Naive thymus-derived CD4-positive, alpha-beta T cell (primary cell): ENCODE measurements at regions of chr1 and their contacts with region 1.

Region 1: GRCh38 chr1:15526490-15527339 is at the start of gene DNAJC16:
- DNase-seq: peak; percentile 75 to 98 (median 96)
- ATAC-seq: peak; percentile 50
- H3K4me3 ChIP-seq: peak within 1 kb of the TSS; percentile 78
- H3K4me3 Mint-ChIP-seq: peak within 1 kb of the TSS; percentile 82 to 100 (median 91)
- H3K27ac ChIP-seq: peak within 1 kb of the TSS; percentile 100
- H3K27ac Mint-ChIP-seq: peak within 1 kb of the TSS; percentile 90 to 100 (median 100)
- H3K4me1 ChIP-seq: peaks cover 21 to 28% of the 10 kb centered on the region in 2 donors
- H3K4me1 Mint-ChIP-seq: peaks cover 33 to 71% (median 60%) of the 10 kb centered on the region in 7 donors
- H3K27me3 ChIP-seq: no peaks in the 10 kb centered on the region
- H3K27me3 Mint-ChIP-seq: no peaks in the 10 kb centered on the region
- total RNA-seq, gene DNAJC16: 17.8 to 29.4 (median 25.0) TPM

Region 2: DNA sequence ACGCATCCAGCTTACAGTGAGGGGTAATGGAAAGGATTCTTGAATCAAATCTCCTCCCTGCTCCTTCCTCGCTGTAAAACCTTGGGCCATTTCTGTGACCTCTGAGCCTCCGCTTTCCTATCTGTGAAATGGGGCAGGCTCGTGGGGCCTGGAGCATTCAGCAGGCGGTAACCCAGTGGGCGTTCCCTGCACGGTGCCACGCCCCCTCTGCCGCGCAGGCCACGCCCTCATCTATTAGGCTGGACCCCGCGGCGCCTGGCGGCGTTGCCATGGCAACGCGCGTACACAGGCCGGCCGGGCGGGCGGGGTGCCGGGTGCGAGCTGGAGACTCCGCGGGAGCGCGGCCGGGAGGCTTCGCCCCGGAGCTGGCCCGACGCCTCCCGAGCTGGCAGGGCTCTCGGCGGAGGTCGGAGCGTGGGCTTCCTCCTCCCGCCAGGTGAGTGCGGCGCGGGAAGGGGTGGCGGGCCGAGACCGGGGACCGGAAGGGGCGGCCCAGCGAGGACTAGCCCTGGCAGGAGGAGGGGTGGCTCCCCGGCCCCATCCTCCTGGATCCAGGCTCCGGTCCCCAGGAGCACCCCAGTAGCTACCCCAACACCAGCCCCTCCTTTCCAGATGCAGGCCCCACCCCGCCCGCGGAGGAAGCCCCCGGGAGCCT is 279.6 kb before region 1 on chr1 and contains the start of gene FHAD1:
- CTCF ChIA-PET with region 1: no interaction called
- POLR2A ChIA-PET with region 1: no interaction called
- intact Hi-C with region 1: loop called in 1 of 2 experiments (anchors 5 kb)
- DNase-seq: peak in 1 of 9 donors; percentile 52
- ATAC-seq: peak; percentile 64
- H3K4me3 ChIP-seq: no peak within 1 kb of the TSS
- H3K4me3 Mint-ChIP-seq: peak within 1 kb of the TSS in 9 of 10 donors; percentile 45 to 80 (median 72)
- H3K27ac ChIP-seq: no peak within 1 kb of the TSS
- H3K27ac Mint-ChIP-seq: peak within 1 kb of the TSS in 6 of 9 donors; percentile 3 to 80 (median 52)
- H3K4me1 ChIP-seq: peaks cover 12 to 28% of the 10 kb centered on the region in 2 donors
- H3K4me1 Mint-ChIP-seq: peaks cover 13 to 46% (median 31%) of the 10 kb centered on the region in 7 donors
- H3K27me3 ChIP-seq: peaks cover 0 to 3% of the 10 kb centered on the region in 2 donors
- H3K27me3 Mint-ChIP-seq: peaks cover 39 to 78% (median 46%) of the 10 kb centered on the region in 5 donors
- total RNA-seq, gene FHAD1: 0.19 to 1.1 TPM in 2 of 5 experiments, not detected in the others

Region 3: GRCh38 chr1:15584489-15585363 is 58.0 kb after region 1 on chr1 and contains the start of gene AGMAT:
- CTCF ChIA-PET with region 1: no interaction called
- POLR2A ChIA-PET with region 1: interaction called, 13 read pairs
- intact Hi-C with region 1: loop called (anchors 1 kb)
- DNase-seq: peak; percentile 37 to 76 (median 54)
- ATAC-seq: peak; percentile 82
- H3K4me3 ChIP-seq: peak within 1 kb of the TSS; percentile 69
- H3K4me3 Mint-ChIP-seq: peak within 1 kb of the TSS; percentile 81 to 94 (median 88)
- H3K27ac ChIP-seq: peak within 1 kb of the TSS; percentile 88
- H3K27ac Mint-ChIP-seq: peak within 1 kb of the TSS; percentile 76 to 98 (median 94)
- H3K4me1 ChIP-seq: peaks cover 13 to 29% of the 10 kb centered on the region in 2 donors
- H3K4me1 Mint-ChIP-seq: peaks cover 12 to 48% (median 33%) of the 10 kb centered on the region in 7 donors
- H3K27me3 ChIP-seq: no peaks in the 10 kb centered on the region
- H3K27me3 Mint-ChIP-seq: no peaks in the 10 kb centered on the region
- total RNA-seq, gene AGMAT: 6.4 to 21.5 (median 9.5) TPM

Region 4: DNA sequence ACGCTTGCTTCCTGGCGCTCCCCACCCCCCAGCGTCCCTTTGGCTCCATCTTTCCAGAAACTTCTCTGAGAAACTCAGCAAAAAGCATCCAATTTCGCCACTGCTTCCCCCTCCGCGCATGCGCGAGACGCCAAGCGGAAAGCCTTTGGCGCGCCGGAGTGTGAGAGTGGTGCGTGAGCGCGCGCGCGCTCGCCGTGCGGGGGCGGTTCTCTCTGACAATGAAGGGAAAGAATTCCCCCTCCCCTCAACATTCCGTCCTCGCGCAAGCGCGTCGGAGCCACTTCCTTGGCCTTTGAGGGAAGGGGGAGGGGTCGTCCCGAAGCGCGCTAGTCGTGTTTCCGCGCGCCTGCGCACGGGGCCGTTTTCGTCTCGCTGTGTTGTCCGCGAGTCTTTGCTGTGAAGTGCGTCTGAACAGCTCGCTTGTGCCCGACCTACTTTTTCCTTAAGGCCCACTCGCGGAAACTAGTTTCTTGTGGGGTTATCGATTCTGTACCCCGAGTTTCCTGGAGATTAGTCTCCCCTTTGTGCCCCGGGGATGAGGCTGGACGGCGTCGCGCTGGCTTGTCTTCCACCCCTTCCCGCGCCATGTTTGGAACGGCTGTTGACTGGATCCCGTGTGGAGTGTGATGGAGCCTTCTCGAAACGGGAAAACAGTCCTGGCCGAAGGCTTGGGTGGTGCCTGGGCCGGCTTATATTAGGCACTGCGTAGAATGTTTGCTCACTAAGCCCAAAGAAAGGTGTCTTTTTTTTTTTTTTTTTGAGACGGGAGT is 309.2 kb after region 1 on chr1:
- CTCF ChIA-PET with region 1: no interaction called
- POLR2A ChIA-PET with region 1: interaction called, 5 read pairs
- intact Hi-C with region 1: loop called (anchors 1 kb)
- DNase-seq: peak; percentile 96 to 99 (median 98)
- ATAC-seq: peak; percentile 77
- H3K4me3 ChIP-seq: peak overlapping the region; percentile 100
- H3K4me3 Mint-ChIP-seq: peak overlapping the region; percentile 88 to 100 (median 96)
- H3K27ac ChIP-seq: peak overlapping the region; percentile 98
- H3K27ac Mint-ChIP-seq: peak overlapping the region; percentile 98 to 100 (median 99)
- H3K4me1 ChIP-seq: peaks cover 12 to 16% of the 10 kb centered on the region in 2 donors
- H3K4me1 Mint-ChIP-seq: peaks cover 5 to 35% (median 24%) of the 10 kb centered on the region in 7 donors
- H3K27me3 ChIP-seq: no peaks in the 10 kb centered on the region
- H3K27me3 Mint-ChIP-seq: peaks cover 0 to 3% (median 0%) of the 10 kb centered on the region in 5 donors

Region 5: GRCh38 chr1:16236511-16237342 is 710.0 kb after region 1 on chr1 and contains the start of gene CPLANE2:
- CTCF ChIA-PET with region 1: no interaction called
- POLR2A ChIA-PET with region 1: no interaction called
- intact Hi-C with region 1: loop called in 1 of 2 experiments (anchors 2 kb)
- DNase-seq: peak; percentile 91 to 99 (median 94)
- ATAC-seq: peak; percentile 89
- H3K4me3 ChIP-seq: peak within 1 kb of the TSS; percentile 94
- H3K4me3 Mint-ChIP-seq: peak within 1 kb of the TSS; percentile 85 to 95 (median 92)
- H3K27ac ChIP-seq: peak within 1 kb of the TSS; percentile 78
- H3K27ac Mint-ChIP-seq: peak within 1 kb of the TSS; percentile 91 to 97 (median 95)
- H3K4me1 ChIP-seq: peaks cover 15 to 19% of the 10 kb centered on the region in 2 donors
- H3K4me1 Mint-ChIP-seq: peaks cover 0 to 28% (median 23%) of the 10 kb centered on the region in 7 donors
- H3K27me3 ChIP-seq: no peaks in the 10 kb centered on the region
- H3K27me3 Mint-ChIP-seq: no peaks in the 10 kb centered on the region
- total RNA-seq, gene CPLANE2: 6.6 to 11.4 (median 8.8) TPM

Region 6: DNA sequence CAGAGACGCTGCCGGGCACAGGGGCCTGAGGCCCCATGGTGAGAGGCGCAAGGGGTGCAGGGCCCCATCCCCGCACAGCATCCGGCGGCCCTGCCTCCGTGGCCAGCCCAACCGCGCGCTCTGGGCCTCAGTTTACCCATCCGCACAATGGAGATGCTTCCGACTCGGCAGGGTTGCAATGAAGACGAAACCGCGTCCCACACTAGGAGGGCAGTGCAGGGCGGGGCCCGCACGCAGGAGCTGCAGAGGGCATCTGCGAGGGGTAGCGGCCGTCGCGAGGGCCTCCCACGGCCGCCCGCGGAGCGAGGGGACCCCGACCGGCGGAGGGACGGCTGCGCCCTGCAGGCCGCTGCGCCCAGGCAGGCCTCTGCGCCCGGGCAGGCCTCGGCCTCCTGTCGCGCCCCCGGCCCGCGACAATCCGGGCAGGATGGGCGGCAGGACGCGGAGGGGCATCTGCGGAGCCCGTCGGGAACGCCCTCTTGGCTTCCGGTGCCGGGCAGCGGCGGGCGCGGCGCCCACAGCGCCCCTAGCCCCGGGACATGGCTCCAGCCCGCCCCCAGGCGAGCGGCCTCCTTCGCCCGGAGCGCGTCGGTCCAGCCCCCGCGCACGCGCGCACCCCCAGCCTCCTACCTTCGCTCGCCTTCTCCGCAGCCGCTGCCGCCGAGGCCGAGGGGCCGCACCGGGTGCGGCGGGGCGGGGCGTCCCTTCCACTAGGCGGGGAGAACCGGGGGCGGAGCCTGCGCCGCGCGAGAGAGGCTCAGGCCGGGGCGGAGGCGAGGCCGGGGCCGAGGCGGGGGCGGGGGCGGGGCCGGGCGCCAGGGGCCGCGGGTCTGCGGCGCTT is 972.1 kb after region 1 on chr1:
- CTCF ChIA-PET with region 1: no interaction called
- POLR2A ChIA-PET with region 1: no interaction called
- intact Hi-C with region 1: loop called in 1 of 2 experiments (anchors 10 kb)
- DNase-seq: peak; percentile 64 to 91 (median 74)
- ATAC-seq: peak; percentile 94
- H3K4me3 ChIP-seq: peak overlapping the region; percentile 83
- H3K4me3 Mint-ChIP-seq: peak overlapping the region; percentile 83 to 95 (median 88)
- H3K27ac ChIP-seq: peak overlapping the region; percentile 56
- H3K27ac Mint-ChIP-seq: peak overlapping the region in 6 of 9 donors; percentile 38 to 85 (median 78)
- H3K4me1 ChIP-seq: no peaks in the 10 kb centered on the region
- H3K4me1 Mint-ChIP-seq: peaks cover 9 to 27% (median 20%) of the 10 kb centered on the region in 7 donors
- H3K27me3 ChIP-seq: no peaks in the 10 kb centered on the region
- H3K27me3 Mint-ChIP-seq: peaks cover 0 to 9% (median 0%) of the 10 kb centered on the region in 5 donors

Region 7: DNA sequence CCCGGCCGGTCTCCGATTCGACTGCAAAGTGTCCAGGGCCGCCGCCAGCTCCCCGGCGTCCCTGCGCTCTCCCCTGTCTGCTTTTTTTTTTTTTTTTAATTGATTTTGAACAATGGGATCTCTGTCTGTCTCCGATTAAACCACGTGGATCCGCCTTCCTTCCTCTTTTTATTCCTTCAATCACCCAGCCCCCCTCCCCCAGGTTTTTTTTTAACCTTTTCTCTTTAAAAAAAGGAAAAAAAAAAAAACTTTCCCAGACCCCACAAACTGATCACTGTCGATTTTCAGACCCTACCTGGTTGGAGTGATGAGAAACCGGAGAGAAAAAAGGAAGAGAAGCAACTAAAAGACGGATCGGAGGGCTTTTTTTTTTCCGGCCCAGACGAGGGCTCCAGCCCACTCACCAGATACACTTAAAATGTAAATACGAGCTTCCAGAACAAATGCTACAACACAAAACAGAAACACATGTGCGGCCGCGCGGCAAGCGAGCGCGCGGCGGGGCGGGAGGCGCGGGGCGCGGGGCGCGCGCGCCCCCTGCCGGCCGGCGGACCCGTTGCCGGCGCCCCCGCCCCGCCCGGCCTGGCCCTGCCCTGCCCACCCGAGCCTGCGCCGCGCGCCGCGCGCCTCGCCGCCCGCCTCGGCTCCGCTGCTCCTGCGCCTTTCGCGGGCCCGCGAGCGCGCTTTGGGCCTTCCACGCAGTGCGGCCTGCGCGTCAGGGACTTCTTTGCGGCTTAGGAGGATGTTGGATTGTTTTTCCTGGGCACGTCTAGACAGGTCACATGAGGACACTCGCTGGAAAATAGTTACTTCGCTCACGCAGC is 1912.7 kb after region 1 on chr1 and contains the start of gene RCC2:
- CTCF ChIA-PET with region 1: no interaction called
- POLR2A ChIA-PET with region 1: no interaction called
- intact Hi-C with region 1: loop called (anchors 5 kb)
- DNase-seq: peak; percentile 63 to 80 (median 74)
- ATAC-seq: peak; percentile 91
- H3K4me3 ChIP-seq: peak within 1 kb of the TSS; percentile 94
- H3K4me3 Mint-ChIP-seq: peak within 1 kb of the TSS; percentile 92 to 99 (median 96)
- H3K27ac ChIP-seq: peak within 1 kb of the TSS; percentile 86
- H3K27ac Mint-ChIP-seq: peak within 1 kb of the TSS; percentile 87 to 98 (median 96)
- H3K4me1 ChIP-seq: peaks cover 14 to 19% of the 10 kb centered on the region in 2 donors
- H3K4me1 Mint-ChIP-seq: peaks cover 17 to 54% (median 43%) of the 10 kb centered on the region in 7 donors
- H3K27me3 ChIP-seq: no peaks in the 10 kb centered on the region
- H3K27me3 Mint-ChIP-seq: no peaks in the 10 kb centered on the region
- total RNA-seq, gene RCC2: 42.1 to 130 (median 46.0) TPM